Endothelial cell of umbilical vein (primary cell): ENCODE measurements at regions of chr1 and their contacts with region 1.

Region 1: GRCh38 chr1:186482661-186483255 is 21.8 kb upstream of the PDC start:
- DNase-seq: peak; percentile 90
- H3K4me3 ChIP-seq: no peak overlapping the region
- H3K27ac ChIP-seq: peak overlapping the region; percentile 19
- H3K4me1 ChIP-seq: peaks cover 16% of the 10 kb centered on the region
- H3K27me3 ChIP-seq: no peaks in the 10 kb centered on the region
- CTCF ChIP-seq: peak; percentile 81 to 87
- POLR2A ChIP-seq: no peak

Region 2: DNA sequence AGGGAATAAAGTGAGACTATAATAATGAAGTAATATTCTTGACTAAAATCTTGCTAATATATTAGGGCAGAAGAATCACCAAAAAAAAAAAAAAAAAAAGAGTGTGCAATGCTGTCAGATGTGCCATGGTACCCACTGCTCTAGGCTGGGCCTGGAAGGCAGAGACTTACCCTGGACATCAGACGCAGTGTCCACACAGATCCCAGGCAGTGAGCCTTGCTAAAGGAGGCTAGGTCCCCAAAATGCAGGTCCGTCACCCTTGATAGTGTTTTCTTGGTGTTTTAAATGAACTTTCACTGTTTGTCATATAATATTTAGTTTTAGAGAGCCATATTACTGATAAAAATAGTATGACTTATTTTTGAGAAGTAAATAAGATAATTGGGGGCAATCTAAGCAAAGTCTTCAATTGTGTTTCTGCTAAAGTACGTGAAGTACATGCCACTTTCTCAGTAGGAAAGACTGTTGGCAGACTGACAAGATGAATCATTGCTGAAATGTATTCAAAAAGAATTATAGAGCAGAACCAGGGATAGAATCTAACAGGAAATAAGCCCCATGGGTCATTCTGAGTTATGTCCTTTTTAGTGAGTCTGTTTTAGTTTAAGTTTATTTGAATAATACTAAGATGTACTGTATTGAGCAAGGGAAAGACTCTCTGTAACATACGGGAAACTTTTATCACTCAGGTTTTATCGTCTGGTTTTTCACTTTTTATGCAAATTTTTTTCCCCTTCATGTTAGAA is 52.8 kb after region 1 on chr1:
- CTCF ChIA-PET with region 1: no interaction called
- POLR2A ChIA-PET with region 1: no interaction called
- dilution Hi-C with region 1: no loop called
- intact Hi-C with region 1: loop called (anchors 5 kb)
- DNase-seq: peak; percentile 96
- H3K4me3 ChIP-seq: no peak overlapping the region
- H3K27ac ChIP-seq: peak overlapping the region; percentile 77
- H3K4me1 ChIP-seq: peaks cover 27% of the 10 kb centered on the region
- H3K27me3 ChIP-seq: no peaks in the 10 kb centered on the region
- CTCF ChIP-seq: no peak
- POLR2A ChIP-seq: no peak

Region 3: GRCh38 chr1:186763107-186763506 is 280.3 kb after region 1 on chr1:
- CTCF ChIA-PET with region 1: no interaction called
- POLR2A ChIA-PET with region 1: no interaction called
- dilution Hi-C with region 1: no loop called
- intact Hi-C with region 1: loop called (anchors 1 kb)
- DNase-seq: peak; percentile 96
- H3K4me3 ChIP-seq: no peak overlapping the region
- H3K27ac ChIP-seq: peak overlapping the region; percentile 92
- H3K4me1 ChIP-seq: peaks cover 20% of the 10 kb centered on the region
- H3K27me3 ChIP-seq: no peaks in the 10 kb centered on the region
- CTCF ChIP-seq: no peak
- POLR2A ChIP-seq: no peak

Region 4: GRCh38 chr1:186806477-186806876 is 323.7 kb after region 1 on chr1:
- CTCF ChIA-PET with region 1: interaction called, 6 read pairs
- POLR2A ChIA-PET with region 1: no interaction called
- dilution Hi-C with region 1: no loop called
- intact Hi-C with region 1: loop called (anchors 1 kb)
- DNase-seq: peak; percentile 73
- H3K4me3 ChIP-seq: no peak overlapping the region
- H3K27ac ChIP-seq: no peak overlapping the region
- H3K4me1 ChIP-seq: no peaks in the 10 kb centered on the region
- H3K27me3 ChIP-seq: no peaks in the 10 kb centered on the region
- CTCF ChIP-seq: peak; percentile 32 to 49
- POLR2A ChIP-seq: no peak